Activated CD8-positive, alpha-beta T cell treated with anti-CD3 and anti-CD28 coated beads for 36 hours (primary cell): ENCODE measurements at regions of chr2 and their contacts with region 1.

Region 1: GRCh38 chr2:158745044-158745865 is 49.9 kb upstream of the DAPL1 start:
- DNase-seq: peak; percentile 70
- ATAC-seq: peak; percentile 65
- H3K4me3 Mint-ChIP-seq: no peak overlapping the region
- H3K27ac Mint-ChIP-seq: no peak overlapping the region
- H3K4me1 Mint-ChIP-seq: peaks cover 3% of the 10 kb centered on the region
- H3K27me3 Mint-ChIP-seq: peaks cover 14% of the 10 kb centered on the region
- CTCF ChIP-seq: no peak

Region 2: DNA sequence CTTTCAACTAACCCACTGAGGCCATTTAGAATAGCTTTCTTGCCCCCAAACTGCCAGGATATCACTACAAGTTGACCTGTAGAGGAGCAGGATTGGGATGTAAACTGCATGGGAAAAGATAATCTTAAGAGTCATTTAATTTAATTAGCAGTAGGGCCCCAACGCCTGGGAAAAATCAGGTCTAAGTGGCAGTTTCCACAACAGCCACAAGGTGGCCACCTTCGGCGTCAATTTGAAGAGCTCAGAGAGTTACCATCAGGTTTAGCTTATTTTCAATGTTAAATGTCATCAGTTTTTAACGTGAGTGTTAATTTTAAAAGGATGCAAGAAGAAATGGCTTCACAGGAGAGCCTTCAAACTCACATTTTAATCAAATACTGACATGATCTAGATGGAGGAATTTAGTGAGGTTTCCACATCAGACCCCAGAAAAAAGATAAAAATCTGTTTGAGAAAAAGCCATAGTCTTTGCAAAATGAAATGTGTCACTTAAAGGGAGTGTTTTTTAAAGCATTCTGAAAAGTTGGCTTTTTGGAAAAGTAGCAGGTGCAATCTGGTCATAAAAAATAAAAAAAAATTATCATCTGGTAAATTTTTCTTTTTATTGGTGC is 720.9 kb before region 1 on chr2:
- CTCF ChIA-PET with region 1: interaction called, 44 read pairs
- POLR2A ChIA-PET with region 1: no interaction called
- intact Hi-C with region 1: loop called (anchors 5 kb)
- DNase-seq: peak; percentile 70
- ATAC-seq: peak; percentile 58
- H3K4me3 Mint-ChIP-seq: no peak overlapping the region
- H3K27ac Mint-ChIP-seq: no peak overlapping the region
- H3K4me1 Mint-ChIP-seq: no peaks in the 10 kb centered on the region
- H3K27me3 Mint-ChIP-seq: no peaks in the 10 kb centered on the region
- CTCF ChIP-seq: peak; percentile 82

Region 3: GRCh38 chr2:158034199-158034866 is 710.9 kb before region 1 on chr2:
- CTCF ChIA-PET with region 1: interaction called, 23 read pairs
- POLR2A ChIA-PET with region 1: no interaction called
- intact Hi-C with region 1: no loop called
- DNase-seq: peak; percentile 32
- ATAC-seq: no peak
- H3K4me3 Mint-ChIP-seq: no peak overlapping the region
- H3K27ac Mint-ChIP-seq: no peak overlapping the region
- H3K4me1 Mint-ChIP-seq: no peaks in the 10 kb centered on the region
- H3K27me3 Mint-ChIP-seq: peaks cover 16% of the 10 kb centered on the region
- CTCF ChIP-seq: peak; percentile 16

Region 4: DNA sequence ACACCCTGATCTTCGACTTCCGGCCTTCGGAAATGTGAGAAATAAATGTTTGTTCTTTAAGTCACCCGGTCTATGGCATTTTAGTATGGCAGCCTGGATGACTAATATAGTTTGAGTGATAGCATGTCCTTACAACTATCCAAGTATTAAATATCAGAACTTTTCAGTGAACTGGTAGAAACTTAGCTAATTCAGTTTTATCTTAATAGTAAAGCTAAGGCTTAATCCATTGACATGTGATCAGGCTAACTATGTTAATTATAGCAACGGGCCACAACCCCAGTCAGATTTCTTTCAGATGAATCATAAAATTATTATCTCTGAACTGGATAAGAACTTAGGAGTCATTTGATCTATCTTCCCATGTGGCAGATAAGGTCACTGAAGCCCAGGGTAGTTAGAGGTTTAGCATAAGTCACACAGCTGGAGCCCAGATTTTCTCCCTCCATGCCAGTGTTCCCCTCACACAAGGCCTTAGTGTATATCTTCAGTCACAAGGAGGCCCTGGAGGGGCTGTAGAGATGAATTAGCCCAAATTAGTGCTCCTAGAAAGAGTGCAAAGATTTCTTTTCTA is 684.3 kb before region 1 on chr2:
- CTCF ChIA-PET with region 1: no interaction called
- POLR2A ChIA-PET with region 1: no interaction called
- intact Hi-C with region 1: no loop called
- DNase-seq: no peak
- ATAC-seq: no peak
- H3K4me3 Mint-ChIP-seq: no peak overlapping the region
- H3K27ac Mint-ChIP-seq: no peak overlapping the region
- H3K4me1 Mint-ChIP-seq: no peaks in the 10 kb centered on the region
- H3K27me3 Mint-ChIP-seq: no peaks in the 10 kb centered on the region
- CTCF ChIP-seq: no peak

Region 5: DNA sequence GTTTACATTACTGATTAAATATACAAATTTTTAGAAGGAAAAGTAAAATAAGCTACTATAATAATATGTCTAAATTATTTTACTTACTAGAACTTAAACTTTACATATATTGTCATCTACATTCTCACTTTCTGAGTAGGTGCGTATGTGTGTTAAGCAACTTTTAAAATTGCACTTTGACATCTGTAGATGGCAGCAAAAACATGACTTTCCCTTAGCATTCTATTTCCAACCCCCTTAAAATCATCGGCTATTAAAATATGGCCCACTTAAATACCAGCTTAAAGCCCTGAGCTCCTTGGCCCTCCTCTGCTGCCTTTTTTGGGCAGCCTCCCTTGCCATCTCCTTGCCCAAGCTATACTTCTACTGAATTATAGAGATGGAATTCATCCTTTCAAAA is 565.6 kb before region 1 on chr2:
- CTCF ChIA-PET with region 1: interaction called, 29 read pairs
- POLR2A ChIA-PET with region 1: no interaction called
- intact Hi-C with region 1: loop called (anchors 5 kb)
- DNase-seq: no peak
- ATAC-seq: no peak
- H3K4me3 Mint-ChIP-seq: no peak overlapping the region
- H3K27ac Mint-ChIP-seq: no peak overlapping the region
- H3K4me1 Mint-ChIP-seq: no peaks in the 10 kb centered on the region
- H3K27me3 Mint-ChIP-seq: peaks cover 29% of the 10 kb centered on the region
- CTCF ChIP-seq: peak; percentile 41

Region 6: DNA sequence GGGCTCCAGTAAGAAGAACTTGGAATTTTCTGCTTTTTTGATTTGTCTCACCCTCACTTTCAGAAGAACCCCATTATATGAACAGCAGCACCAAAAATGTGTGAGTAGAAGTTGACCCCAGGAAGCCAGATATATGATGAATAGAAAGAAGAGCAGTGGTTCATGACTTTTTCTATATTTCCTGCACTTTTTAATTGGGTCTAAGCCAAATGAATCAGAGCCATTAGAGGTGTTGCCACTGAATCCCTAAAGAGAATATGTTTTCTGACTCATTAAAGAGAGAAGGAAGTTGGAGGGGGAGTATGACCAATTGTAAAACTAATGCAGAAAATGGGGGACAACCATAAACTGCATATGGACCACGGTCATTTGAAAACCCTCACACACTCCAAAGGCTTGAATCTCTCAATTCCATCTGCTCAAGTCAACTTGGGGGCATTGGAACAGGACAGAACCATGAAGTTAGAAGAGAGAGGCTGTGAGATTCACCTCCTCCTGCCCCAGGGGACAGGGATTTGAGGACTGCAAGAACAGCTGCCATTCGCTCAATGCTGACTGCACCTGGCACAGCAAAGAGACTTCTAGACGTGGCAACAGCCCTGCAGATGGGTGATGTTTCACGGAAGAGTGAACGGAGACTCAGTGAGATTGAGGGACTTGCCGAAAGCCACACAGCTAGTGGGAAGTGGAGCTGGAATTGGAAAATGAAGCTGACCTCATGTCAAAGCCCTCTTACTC is 52.9 kb after region 1 on chr2:
- CTCF ChIA-PET with region 1: no interaction called
- POLR2A ChIA-PET with region 1: no interaction called
- intact Hi-C with region 1: no loop called
- DNase-seq: no peak
- ATAC-seq: no peak
- H3K4me3 Mint-ChIP-seq: no peak overlapping the region
- H3K27ac Mint-ChIP-seq: no peak overlapping the region
- H3K4me1 Mint-ChIP-seq: no peaks in the 10 kb centered on the region
- H3K27me3 Mint-ChIP-seq: peaks cover 8% of the 10 kb centered on the region
- CTCF ChIP-seq: no peak

Region 7: DNA sequence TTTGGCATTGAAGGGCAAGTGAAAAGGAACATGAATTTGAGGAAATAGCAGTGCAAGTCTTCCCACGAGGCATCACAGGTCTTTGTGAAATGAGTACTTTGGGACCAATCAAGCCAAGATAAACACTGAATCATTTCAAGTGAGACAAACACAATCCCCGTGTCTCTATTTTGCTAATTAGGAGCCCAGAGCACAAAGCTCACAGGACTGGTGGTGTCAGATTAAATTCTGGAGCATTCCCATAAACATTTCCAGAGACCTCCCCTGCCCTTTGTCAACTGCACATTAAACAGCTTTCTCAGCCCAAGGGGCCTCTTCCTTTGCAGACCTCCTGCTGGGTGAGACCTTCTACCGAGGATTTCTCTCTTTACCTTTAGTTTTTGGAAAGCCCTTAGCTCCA is 100.6 kb after region 1 on chr2:
- CTCF ChIA-PET with region 1: no interaction called
- POLR2A ChIA-PET with region 1: no interaction called
- intact Hi-C with region 1: no loop called
- DNase-seq: no peak
- ATAC-seq: no peak
- H3K4me3 Mint-ChIP-seq: no peak overlapping the region
- H3K27ac Mint-ChIP-seq: no peak overlapping the region
- H3K4me1 Mint-ChIP-seq: no peaks in the 10 kb centered on the region
- H3K27me3 Mint-ChIP-seq: no peaks in the 10 kb centered on the region
- CTCF ChIP-seq: no peak

Region 8: GRCh38 chr2:158990397-158991209 is 245.3 kb after region 1 on chr2:
- CTCF ChIA-PET with region 1: no interaction called
- POLR2A ChIA-PET with region 1: no interaction called
- intact Hi-C with region 1: no loop called
- DNase-seq: no peak
- ATAC-seq: no peak
- H3K4me3 Mint-ChIP-seq: no peak overlapping the region
- H3K27ac Mint-ChIP-seq: no peak overlapping the region
- H3K4me1 Mint-ChIP-seq: no peaks in the 10 kb centered on the region
- H3K27me3 Mint-ChIP-seq: peaks cover 1% of the 10 kb centered on the region
- CTCF ChIP-seq: no peak